ENCODE measurements at regions of chr16 and their contacts with region 1.

Region 1: DNA sequence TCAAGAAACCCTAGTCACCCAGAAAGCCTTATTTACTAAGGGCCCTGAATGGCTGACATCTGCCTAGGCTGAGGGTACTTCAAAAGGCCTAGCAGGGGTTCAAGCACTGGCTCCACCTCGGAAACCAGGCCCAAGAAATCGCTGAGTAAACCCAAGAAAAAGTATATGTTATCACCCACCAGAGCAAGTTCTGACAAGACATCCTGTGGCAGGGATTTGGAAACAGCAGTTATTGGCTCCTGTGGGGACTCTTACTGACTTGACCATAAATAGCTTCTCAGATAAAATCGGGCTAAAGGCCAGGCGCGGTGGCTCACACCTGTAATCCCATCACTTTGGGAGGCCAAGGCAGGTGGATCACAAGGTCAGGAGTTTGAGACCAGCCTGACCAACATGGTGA is 12.2 kb downstream of the ATP6V0D1 start:
- DNase-seq: no peak
- ATAC-seq: no peak

Region 2: GRCh38 chr16:67068212-67068753 is 400.4 kb before region 1 on chr16:
- intact Hi-C with region 1: no loop called
- DNase-seq: no peak
- ATAC-seq: no peak

Region 3: DNA sequence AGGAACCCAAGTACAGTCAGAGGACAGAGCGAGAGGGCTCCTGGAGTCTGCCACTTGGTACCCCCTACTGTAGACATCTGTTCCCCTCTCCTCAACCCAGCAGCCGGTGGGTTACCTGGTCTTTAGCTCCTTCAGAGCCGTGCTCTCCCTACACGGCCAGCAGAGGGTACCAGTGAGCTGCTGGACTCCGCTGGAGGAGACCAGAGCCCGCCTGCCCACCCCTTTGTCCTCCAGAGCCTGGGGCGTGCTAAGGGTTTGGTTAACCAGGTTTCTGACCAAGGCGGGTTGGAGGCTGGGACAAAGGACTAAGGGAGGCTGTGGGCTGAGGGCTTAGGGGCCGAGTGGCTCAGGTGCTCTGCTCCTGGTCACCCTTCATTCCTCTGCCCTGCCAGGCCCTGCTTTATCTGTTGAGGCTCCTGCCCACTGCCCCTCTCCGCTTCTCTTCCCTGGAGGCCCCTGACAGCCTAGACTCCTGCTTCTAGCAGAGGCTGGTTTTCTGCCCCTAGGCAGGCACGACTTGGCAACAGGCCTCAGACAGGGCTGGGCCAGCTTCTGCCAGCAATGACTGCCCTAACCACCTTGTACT is 40.5 kb before region 1 on chr16:
- intact Hi-C with region 1: loop called (anchors 5 kb)
- DNase-seq: peak; percentile 83
- ATAC-seq: peak; percentile 88